ENCODE measurements at regions of chr5 and their contacts with region 1.

Region 1: GRCh38 chr5:136037001-136037705 is 8.4 kb downstream of the TGFBI start:
- DNase-seq: peak; percentile 55 to 70 (median 63)
- H3K4me3 ChIP-seq: no peak overlapping the region
- H3K4me3 Mint-ChIP-seq: peak overlapping the region; percentile 4 to 83 (median 62)
- H3K27ac ChIP-seq: peak overlapping the region; percentile 20
- H3K27ac Mint-ChIP-seq: peak overlapping the region; percentile 86 to 97 (median 93)
- H3K4me1 ChIP-seq: peaks cover 46% of the 10 kb centered on the region
- H3K4me1 Mint-ChIP-seq: peaks cover 29 to 79% (median 44%) of the 10 kb centered on the region in 4 donors
- H3K27me3 ChIP-seq: no peaks in the 10 kb centered on the region
- H3K27me3 Mint-ChIP-seq: no peaks in the 10 kb centered on the region

Region 2: DNA sequence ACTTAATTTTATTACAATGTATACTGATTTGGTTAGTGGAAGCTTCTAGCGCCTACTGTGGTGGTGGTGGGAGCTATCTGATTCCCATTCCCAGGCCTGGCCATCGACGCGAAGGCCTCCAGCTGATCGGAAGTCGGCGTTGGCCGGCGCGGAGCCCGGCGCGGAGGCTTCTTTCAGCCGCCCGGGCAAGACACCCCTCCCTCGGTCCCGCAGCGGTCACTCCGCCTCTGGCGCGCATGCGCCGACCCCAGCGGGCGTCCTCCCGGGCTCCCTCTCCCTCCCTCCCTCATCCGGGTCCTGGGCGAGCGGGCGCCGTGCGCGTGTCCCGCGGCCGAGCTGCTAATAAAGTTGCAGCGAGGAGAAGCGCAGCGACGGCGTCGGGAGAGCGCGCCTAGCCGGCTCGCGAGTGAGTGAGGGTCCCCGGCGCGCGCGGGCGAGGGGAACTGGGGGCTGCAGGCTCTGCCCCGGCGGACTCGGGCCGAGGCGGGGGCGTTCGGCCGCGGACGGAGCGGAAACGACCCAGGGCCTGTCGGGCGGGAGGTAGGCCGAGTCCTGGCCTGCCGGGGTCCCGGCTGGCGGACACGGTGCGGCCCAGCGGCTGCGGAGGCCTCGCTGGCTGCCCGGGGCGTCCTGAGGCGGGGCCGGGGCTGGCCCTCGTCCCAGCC is 95.5 kb after region 1 on chr5 and contains the start of gene SMAD5:
- CTCF ChIA-PET with region 1: no interaction called
- POLR2A ChIA-PET with region 1: no interaction called
- intact Hi-C with region 1: loop called (anchors 5 kb)
- DNase-seq: peak; percentile 74 to 80 (median 78)
- H3K4me3 ChIP-seq: peak within 1 kb of the TSS; percentile 70 to 77
- H3K4me3 Mint-ChIP-seq: peak within 1 kb of the TSS; percentile 93 to 98 (median 95)
- H3K27ac ChIP-seq: peak within 1 kb of the TSS; percentile 65
- H3K27ac Mint-ChIP-seq: peak within 1 kb of the TSS; percentile 87 to 94 (median 92)
- H3K4me1 ChIP-seq: peaks cover 24% of the 10 kb centered on the region
- H3K4me1 Mint-ChIP-seq: peaks cover 19 to 37% (median 27%) of the 10 kb centered on the region in 4 donors
- H3K27me3 ChIP-seq: no peaks in the 10 kb centered on the region
- H3K27me3 Mint-ChIP-seq: peaks cover 3 to 13% of the 10 kb centered on the region in 2 donors
- total RNA-seq, gene SMAD5: 25.7 to 27.3 TPM